Common myeloid progenitor, CD34-positive (primary cell): ENCODE measurements at regions of chr2 and their contacts with region 1.

Region 1: DNA sequence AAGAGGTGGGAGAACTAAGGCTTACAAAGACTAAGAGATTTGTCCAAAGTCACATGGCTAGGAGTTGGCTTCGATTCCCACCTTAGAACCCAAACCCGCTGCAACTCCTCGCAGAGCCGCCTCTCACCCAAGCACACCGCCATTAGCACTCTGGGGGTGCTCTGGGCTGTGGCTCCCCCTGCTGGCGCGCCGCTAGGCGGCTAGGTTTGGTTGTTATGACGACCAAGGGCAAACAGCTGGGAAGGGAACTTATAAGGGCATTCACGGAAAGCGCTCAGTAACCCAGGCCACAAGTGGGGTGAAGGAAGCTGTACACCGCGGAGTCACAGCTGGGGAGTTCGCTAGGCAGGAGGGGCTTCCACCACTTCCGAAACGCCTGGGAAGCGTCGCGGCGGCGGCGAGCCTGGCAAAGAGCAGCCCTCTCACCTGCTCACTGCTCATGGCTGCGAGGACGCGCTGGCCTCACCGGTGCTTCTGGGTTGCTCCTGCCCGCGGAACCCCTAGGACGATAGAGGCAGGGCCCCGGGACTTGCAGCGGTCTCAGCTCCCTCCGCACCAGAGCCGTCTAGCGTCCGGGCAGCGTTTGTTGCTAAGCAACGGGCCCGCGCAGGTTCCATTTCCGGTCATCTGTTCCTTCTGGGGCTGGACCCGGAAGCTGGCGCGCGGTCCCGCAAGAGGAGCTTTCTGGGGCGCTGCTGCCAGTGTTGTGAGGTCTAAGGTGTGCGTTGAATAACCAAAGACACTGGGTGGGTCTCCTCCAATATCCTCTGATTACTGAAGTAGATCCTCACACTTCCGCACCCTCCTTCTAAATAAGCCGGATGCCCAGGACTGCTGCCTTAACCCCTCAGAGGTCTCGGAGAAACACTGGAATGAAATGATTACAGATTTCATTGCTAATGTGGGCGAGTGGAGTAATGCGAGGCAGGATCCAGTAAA is at the start of gene DNAH7:
- DNase-seq: peak; percentile 91 to 97 (median 96)
- H3K4me3 ChIP-seq: peak within 1 kb of the TSS; percentile 29 to 76 (median 66)
- H3K27ac ChIP-seq: peak within 1 kb of the TSS; percentile 11 to 61
- H3K4me1 ChIP-seq: peaks cover 4 to 28% (median 13%) of the 10 kb centered on the region in 4 experiments
- H3K27me3 ChIP-seq: no peaks in the 10 kb centered on the region

Region 2: DNA sequence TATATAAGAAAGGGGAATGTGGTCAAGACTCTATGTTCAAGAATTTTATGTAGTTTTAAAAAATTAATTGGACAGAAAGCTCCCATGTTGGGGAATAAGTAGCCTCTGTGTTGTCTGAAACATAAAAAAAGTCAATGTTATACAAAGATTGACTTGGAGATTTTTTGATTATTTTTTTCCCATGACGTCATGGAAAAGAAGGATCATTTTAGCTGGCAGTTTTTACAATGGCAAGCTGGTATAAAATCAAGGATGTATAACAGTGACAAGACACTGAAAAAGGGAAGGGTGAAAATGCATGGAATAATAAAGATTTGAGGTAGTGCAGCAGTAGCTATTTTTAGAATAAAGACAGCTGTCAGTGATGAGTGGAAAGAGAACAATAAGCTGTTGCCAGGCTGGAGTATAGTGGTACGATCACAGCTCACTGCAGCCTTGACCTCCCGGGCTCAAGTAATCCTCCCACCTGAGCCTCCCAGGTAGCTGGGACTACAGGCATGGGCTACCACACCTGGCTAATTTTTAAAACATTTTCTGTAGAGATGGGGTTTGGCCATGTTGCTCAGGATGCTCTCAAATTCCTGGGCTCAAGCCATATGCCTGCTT is 402.3 kb before region 1 on chr2:
- CTCF ChIA-PET with region 1: interaction called, 16 read pairs
- POLR2A ChIA-PET with region 1: no interaction called
- DNase-seq: no peak
- H3K4me3 ChIP-seq: no peak overlapping the region
- H3K27ac ChIP-seq: no peak overlapping the region
- H3K4me1 ChIP-seq: peaks cover 6 to 23% (median 12%) of the 10 kb centered on the region in 4 experiments
- H3K27me3 ChIP-seq: no peaks in the 10 kb centered on the region

Region 3: DNA sequence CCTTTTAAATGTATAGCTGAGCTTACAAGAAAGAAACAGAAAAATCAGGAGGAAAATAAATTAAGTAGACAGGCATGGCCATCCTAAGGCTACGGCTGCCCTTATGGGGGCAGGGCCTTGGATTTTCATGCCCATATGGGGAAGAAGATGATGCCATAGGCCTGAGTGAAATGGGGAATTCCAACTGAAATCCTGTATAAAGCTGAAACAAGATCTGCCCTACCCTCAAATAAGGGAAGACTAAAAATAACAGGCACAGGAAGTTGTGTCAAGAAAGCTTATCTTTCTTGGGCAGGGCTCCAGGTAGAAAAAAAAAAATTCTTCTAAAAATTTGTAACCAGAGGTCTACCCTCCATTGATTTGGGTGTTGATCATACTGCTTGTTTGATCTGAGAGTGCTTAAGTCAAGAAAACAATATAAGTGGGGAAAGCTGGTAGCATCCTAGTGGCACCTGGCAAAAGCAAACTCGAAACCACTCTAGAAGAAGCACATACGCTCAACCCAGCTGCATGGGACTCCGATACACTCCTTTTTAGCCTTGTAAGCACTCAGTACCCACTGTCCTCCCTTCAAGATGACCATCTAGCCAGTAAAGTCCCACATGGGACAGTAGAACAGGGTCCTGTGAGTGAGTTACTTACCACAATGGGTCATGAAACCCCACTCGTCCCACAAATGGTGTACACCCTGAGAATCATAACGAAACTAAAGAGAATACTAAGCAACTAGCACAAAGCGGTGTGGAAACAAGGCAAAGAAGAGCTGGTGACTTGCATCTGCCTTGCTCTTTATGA is 22.2 kb before region 1 on chr2:
- CTCF ChIA-PET with region 1: interaction called, 21 read pairs
- POLR2A ChIA-PET with region 1: no interaction called
- DNase-seq: peak in 2 of 3 donors; percentile 39 to 45
- H3K4me3 ChIP-seq: peak overlapping the region in 1 of 7 experiments; percentile 4
- H3K27ac ChIP-seq: no peak overlapping the region
- H3K4me1 ChIP-seq: peaks cover 0 to 7% (median 3%) of the 10 kb centered on the region in 4 experiments
- H3K27me3 ChIP-seq: no peaks in the 10 kb centered on the region

Region 4: GRCh38 chr2:196105951-196106350 is 37.4 kb after region 1 on chr2:
- CTCF ChIA-PET with region 1: no interaction called
- POLR2A ChIA-PET with region 1: no interaction called
- DNase-seq: peak; percentile 54 to 93 (median 88)
- H3K4me3 ChIP-seq: peak overlapping the region in 1 of 7 experiments; percentile 30
- H3K27ac ChIP-seq: peak overlapping the region in 1 of 2 experiments; percentile 18
- H3K4me1 ChIP-seq: peaks cover 3 to 28% (median 22%) of the 10 kb centered on the region in 4 experiments
- H3K27me3 ChIP-seq: no peaks in the 10 kb centered on the region